ENCODE measurements at regions of chr12 and their contacts with region 1.

Region 1: DNA sequence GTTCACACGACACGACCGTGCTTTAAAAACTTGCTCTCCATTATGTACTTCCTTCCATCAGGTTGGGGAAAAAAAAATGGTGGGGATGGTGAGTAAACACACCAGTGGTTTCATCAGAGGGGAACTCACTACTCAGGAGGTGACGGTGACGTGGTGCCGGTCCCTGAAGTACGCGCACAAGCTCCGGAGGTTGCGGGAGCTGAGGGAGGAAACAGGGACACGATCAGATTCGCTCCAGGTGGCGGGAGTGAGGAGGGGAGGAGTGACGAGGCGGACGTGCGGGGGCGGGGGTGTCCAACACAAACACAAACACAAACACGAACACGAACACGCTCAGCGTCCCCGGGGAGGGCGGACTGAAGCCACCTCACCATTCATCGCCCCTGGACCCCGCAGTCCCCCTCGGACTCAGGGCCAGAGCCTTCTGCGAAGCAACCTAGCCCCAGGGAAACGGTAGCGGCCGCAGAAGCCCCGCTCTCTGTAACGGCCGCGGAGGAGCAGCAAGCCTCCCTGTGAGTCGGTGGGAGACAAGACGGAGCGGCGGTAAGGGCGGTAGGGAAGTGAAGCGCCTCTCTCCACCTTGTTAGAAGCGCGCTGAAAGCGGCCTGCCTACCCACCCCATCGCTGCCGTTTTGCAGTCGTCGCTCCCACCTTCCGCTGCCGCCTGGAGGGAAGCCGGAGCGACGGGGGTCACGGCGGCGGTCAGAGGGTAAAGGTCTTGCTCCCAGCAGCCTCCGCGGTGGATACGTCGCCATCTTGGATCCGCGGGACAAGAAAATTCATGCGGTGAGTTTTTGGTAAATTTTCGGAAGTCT is at the start of gene CNOT2:
- DNase-seq: peak; percentile 82 to 93 (median 90)
- ATAC-seq: peak; percentile 77 to 80
- H3K4me3 Mint-ChIP-seq: peak within 1 kb of the TSS; percentile 97 to 100 (median 99)
- H3K27ac Mint-ChIP-seq: peak within 1 kb of the TSS; percentile 97 to 100 (median 99)
- H3K4me1 Mint-ChIP-seq: peaks cover 31 to 74% (median 62%) of the 10 kb centered on the region in 4 donors
- H3K27me3 Mint-ChIP-seq: no peaks in the 10 kb centered on the region
- polyA plus RNA-seq, gene CNOT2: 110 to 124 (median 119) TPM

Region 2: DNA sequence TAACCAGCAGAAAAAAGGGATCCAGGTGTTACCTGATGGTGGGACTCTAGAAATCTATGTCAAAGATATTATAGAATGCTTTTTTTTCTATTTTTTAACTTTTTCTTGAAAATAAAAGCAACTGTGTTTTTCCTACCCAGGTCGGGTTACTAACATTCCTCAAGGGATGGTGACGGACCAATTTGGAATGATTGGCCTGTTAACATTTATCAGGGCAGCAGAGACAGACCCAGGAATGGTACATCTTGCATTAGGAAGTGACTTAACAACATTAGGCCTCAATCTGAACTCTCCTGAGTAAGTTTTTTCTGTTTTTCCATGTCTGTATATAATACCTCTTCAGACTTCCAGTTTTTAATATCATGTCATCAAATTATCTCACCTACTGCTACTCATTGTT is 95.6 kb after region 1 on chr12:
- POLR2A ChIA-PET with region 1: no interaction called
- DNase-seq: no peak
- ATAC-seq: no peak
- H3K4me3 Mint-ChIP-seq: no peak overlapping the region
- H3K27ac Mint-ChIP-seq: peak overlapping the region in 1 of 10 donors; percentile 58
- H3K4me1 Mint-ChIP-seq: peaks cover 0 to 5% (median under 1%) of the 10 kb centered on the region in 4 donors
- H3K27me3 Mint-ChIP-seq: no peaks in the 10 kb centered on the region

Region 3: DNA sequence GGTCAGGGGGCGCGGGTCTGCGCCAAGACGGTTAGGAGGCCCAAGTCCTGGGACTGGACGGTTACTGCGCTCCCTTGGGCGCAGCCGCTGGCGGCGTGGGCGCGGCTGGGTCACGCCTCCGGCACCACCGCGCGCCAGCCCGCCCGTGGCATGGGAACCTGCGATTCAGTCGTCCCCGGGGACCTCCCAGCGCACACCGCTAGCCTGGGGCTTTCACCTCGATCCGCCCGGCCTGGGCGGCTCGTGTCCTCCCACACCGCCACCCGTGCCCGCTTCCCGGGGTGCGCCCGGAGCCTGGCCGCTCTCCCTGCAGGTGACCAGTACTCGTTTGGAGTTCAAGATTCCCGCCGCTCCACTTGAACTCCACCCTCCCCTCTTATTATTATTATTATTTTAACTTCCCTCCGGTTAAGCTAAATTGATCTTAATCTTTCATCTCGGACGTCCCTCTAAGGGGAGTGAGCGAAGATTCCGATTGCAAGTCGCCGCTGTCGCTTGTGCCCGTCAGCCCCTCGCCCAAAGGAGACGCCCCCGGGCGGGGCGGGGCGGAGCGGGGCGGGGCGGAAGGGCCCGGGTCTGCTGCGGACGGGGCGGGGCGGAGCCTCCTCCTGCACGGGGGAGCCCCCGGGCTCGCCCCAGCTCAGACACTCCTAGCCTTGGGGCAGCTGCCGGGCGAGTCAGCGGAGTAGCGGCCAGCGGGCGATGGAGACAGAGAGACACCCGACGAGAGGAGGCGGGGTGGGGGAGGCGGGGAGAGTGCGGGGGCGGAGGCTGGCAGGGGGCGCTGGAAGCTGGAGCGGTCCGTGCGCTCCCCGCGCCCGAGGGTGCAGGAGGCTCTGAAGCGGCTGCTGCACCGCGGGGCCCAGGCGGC is 123.0 kb after region 1 on chr12 and contains the start of gene KCNMB4:
- POLR2A ChIA-PET with region 1: interaction called, 18 read pairs
- DNase-seq: peak; percentile 37 to 82 (median 67)
- ATAC-seq: peak; percentile 65 to 71
- H3K4me3 Mint-ChIP-seq: peak within 1 kb of the TSS; percentile 92 to 100 (median 95)
- H3K27ac Mint-ChIP-seq: peak within 1 kb of the TSS; percentile 84 to 95 (median 92)
- H3K4me1 Mint-ChIP-seq: peaks cover 7 to 34% (median 28%) of the 10 kb centered on the region in 4 donors
- H3K27me3 Mint-ChIP-seq: peaks cover 0 to 4% (median 0%) of the 10 kb centered on the region in 5 donors
- polyA plus RNA-seq, gene KCNMB4: 0.64 to 1.8 (median 1.3) TPM

Measured in naive thymus-derived CD8-positive, alpha-beta T cell (primary cell).